ENCODE measurements at regions of chr6 and their contacts with region 1.

Region 1: GRCh38 chr6:26156076-26156849 is 69.0 kb downstream of the HFE start:
- DNase-seq: peak; percentile 77 to 96 (median 84)
- ATAC-seq: peak; percentile 39
- H3K4me3 ChIP-seq: peak overlapping the region; percentile 51 to 86
- H3K4me3 Mint-ChIP-seq: peak overlapping the region; percentile 94
- H3K27ac ChIP-seq: peak overlapping the region; percentile 85 to 98
- H3K27ac Mint-ChIP-seq: peak overlapping the region; percentile 98
- H3K4me1 ChIP-seq: peaks cover 20% of the 10 kb centered on the region
- H3K4me1 Mint-ChIP-seq: peaks cover 34% of the 10 kb centered on the region
- H3K27me3 ChIP-seq: no peaks in the 10 kb centered on the region
- H3K27me3 Mint-ChIP-seq: no peaks in the 10 kb centered on the region
- CTCF ChIP-seq: no peak

Region 2: DNA sequence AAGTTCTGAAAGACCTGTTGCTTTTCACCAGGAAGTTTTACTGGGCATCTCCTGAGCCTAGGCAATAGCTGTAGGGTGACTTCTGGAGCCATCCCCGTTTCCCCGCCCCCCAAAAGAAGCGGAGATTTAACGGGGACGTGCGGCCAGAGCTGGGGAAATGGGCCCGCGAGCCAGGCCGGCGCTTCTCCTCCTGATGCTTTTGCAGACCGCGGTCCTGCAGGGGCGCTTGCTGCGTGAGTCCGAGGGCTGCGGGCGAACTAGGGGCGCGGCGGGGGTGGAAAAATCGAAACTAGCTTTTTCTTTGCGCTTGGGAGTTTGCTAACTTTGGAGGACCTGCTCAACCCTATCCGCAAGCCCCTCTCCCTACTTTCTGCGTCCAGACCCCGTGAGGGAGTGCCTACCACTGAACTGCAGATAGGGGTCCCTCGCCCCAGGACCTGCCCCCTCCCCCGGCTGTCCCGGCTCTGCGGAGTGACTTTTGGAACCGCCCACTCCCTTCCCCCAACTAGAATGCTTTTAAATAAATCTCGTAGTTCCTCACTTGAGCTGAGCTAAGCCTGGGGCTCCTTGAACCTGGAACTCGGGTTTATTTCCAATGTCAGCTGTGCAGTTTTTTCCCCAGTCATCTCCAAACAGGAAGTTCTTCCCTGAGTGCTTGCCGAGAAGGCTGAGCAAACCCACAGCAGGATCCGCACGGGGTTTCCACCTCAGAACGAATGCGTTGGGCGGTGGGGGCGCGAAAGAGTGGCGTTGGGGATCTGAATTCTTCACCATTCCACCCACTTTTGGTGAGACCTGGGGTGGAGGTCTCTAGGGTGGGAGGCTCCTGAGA is 68.8 kb before region 1 on chr6 and contains the start of gene HFE:
- CTCF ChIA-PET with region 1: no interaction called
- POLR2A ChIA-PET with region 1: interaction called, 34 read pairs
- intact Hi-C with region 1: no loop called
- DNase-seq: peak in 7 of 9 experiments; percentile 10 to 59 (median 40)
- ATAC-seq: peak; percentile 35
- H3K4me3 ChIP-seq: peak within 1 kb of the TSS; percentile 75 to 84
- H3K4me3 Mint-ChIP-seq: peak within 1 kb of the TSS; percentile 88
- H3K27ac ChIP-seq: peak within 1 kb of the TSS; percentile 56 to 60
- H3K27ac Mint-ChIP-seq: peak within 1 kb of the TSS; percentile 81
- H3K4me1 ChIP-seq: peaks cover 27% of the 10 kb centered on the region
- H3K4me1 Mint-ChIP-seq: peaks cover 36% of the 10 kb centered on the region
- H3K27me3 ChIP-seq: peaks cover 0 to 2% of the 10 kb centered on the region in 2 experiments
- H3K27me3 Mint-ChIP-seq: no peaks in the 10 kb centered on the region
- CTCF ChIP-seq: no peak
- total RNA-seq, gene HFE: 0.30 to 0.44 TPM

Region 3: DNA sequence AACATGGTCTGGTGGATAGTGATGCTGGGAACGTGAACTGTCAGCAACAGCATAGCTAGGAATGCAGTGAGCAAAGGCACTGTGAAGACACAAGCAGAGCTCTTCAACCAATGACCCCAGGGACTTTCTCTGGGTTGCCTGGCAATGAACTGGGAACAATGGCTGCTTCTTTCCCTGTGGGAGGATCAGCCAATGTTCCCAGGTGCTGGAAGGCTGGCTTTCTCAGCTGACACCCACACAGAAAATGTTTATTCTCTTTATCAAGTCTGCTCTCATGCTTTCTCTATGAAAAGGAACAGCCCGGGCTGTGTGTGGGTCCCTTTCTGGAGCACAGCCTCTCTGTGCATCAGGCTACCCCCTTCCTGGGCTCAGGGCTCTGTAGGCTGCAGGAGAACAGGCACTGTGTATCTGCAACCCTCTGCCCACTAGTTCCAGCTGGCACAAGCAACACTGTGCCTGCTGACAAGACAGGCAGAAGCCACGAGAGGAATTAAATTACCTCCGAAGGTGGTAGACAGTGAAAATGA is 14.8 kb before region 1 on chr6:
- CTCF ChIA-PET with region 1: interaction called, 4 read pairs
- POLR2A ChIA-PET with region 1: interaction called, 40 read pairs
- intact Hi-C with region 1: no loop called
- DNase-seq: no peak
- ATAC-seq: no peak
- H3K4me3 ChIP-seq: no peak overlapping the region
- H3K4me3 Mint-ChIP-seq: no peak overlapping the region
- H3K27ac ChIP-seq: no peak overlapping the region
- H3K27ac Mint-ChIP-seq: no peak overlapping the region
- H3K4me1 ChIP-seq: no peaks in the 10 kb centered on the region
- H3K4me1 Mint-ChIP-seq: peaks cover 2% of the 10 kb centered on the region
- H3K27me3 ChIP-seq: no peaks in the 10 kb centered on the region
- H3K27me3 Mint-ChIP-seq: no peaks in the 10 kb centered on the region
- CTCF ChIP-seq: no peak

Region 4: DNA sequence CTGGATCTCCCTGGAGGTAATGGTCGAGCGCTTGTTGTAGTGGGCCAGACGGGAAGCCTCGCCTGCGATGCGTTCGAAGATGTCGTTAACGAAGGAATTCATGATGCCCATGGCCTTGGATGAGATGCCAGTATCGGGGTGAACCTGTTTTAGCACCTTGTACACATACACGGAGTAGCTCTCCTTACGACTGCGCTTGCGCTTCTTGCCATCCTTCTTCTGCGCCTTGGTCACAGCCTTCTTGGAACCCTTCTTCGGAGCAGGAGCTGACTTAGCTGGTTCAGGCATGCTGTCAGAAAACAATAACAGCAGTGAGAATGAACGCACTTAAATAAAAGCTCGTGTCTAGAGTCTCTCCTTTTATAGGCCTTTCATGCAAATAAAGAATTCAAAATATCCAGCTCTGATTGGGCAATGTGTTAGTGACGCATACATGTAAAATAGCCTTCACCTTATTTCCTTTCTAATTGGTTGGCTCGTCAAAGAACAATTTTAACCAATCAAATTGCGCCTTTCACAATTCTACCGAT is 60.2 kb after region 1 on chr6:
- CTCF ChIA-PET with region 1: interaction called, 7 read pairs
- POLR2A ChIA-PET with region 1: interaction called, 305 read pairs
- intact Hi-C with region 1: loop called (anchors 1 to 2 kb)
- DNase-seq: peak; percentile 61 to 96 (median 73)
- ATAC-seq: peak; percentile 79
- H3K4me3 ChIP-seq: peak overlapping the region; percentile 71 to 74
- H3K4me3 Mint-ChIP-seq: no peak overlapping the region
- H3K27ac ChIP-seq: peak overlapping the region; percentile 82 to 91
- H3K27ac Mint-ChIP-seq: no peak overlapping the region
- H3K4me1 ChIP-seq: peaks cover 19% of the 10 kb centered on the region
- H3K4me1 Mint-ChIP-seq: peaks cover 14% of the 10 kb centered on the region
- H3K27me3 ChIP-seq: no peaks in the 10 kb centered on the region
- H3K27me3 Mint-ChIP-seq: no peaks in the 10 kb centered on the region
- CTCF ChIP-seq: no peak

Region 5: DNA sequence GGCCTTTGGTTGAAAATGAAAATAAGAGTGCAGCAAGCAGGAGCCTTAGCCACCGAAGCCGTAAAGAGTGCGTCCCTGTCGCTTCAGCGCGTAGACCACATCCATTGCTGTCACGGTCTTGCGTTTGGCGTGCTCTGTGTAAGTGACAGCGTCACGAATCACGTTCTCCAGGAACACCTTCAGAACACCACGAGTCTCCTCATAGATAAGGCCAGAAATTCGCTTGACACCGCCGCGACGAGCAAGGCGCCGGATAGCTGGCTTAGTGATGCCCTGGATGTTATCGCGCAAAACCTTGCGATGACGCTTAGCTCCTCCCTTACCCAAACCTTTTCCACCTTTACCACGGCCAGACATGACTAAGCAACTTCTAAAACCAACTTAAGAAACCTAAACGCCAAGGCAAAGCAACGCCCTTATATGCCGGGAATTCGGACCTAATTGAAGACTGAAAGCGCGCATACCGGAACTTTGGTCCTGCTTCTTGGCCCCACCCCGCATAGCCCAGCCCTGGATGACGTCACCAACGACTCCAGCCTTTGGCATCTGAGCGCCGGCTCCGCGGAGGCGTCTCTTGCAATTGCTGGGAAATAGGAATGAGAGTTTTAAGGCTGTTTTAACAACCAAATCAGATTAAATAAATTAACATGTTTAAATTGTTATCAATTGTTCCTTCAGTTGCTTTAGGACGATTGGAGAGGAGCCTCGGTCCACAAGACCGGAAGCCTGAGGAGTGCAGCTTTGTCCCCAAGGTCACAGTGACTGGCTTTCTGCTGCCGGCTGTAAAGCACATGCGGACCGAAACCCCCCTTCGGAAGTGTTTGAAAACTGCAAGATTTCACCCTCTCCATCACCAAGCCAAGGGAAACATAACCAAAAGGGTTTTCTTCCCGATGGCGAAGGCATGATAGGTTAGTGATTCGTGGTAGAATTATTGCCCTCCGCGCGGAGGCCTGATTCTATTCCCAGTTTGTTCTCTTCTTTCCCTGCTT is 129.2 kb after region 1 on chr6:
- CTCF ChIA-PET with region 1: interaction called, 3 read pairs
- POLR2A ChIA-PET with region 1: interaction called, 64 read pairs
- intact Hi-C with region 1: loop called in 1 of 2 experiments (anchors 1 kb)
- DNase-seq: peak; percentile 83 to 99 (median 96)
- ATAC-seq: peak; percentile 82
- H3K4me3 ChIP-seq: peak overlapping the region; percentile 73 to 76
- H3K4me3 Mint-ChIP-seq: peak overlapping the region; percentile 91
- H3K27ac ChIP-seq: peak overlapping the region; percentile 89 to 96
- H3K27ac Mint-ChIP-seq: peak overlapping the region; percentile 97
- H3K4me1 ChIP-seq: peaks cover 14% of the 10 kb centered on the region
- H3K4me1 Mint-ChIP-seq: peaks cover 31% of the 10 kb centered on the region
- H3K27me3 ChIP-seq: no peaks in the 10 kb centered on the region
- H3K27me3 Mint-ChIP-seq: no peaks in the 10 kb centered on the region
- CTCF ChIP-seq: no peak

Region 6: GRCh38 chr6:27809939-27810767 is 1653.9 kb after region 1 on chr6:
- CTCF ChIA-PET with region 1: no interaction called
- POLR2A ChIA-PET with region 1: interaction called, 59 read pairs
- intact Hi-C with region 1: no loop called
- DNase-seq: peak; percentile 63 to 96 (median 74)
- ATAC-seq: peak; percentile 60
- H3K4me3 ChIP-seq: peak overlapping the region; percentile 52 to 65
- H3K4me3 Mint-ChIP-seq: peak overlapping the region; percentile 95
- H3K27ac ChIP-seq: peak overlapping the region; percentile 83 to 87
- H3K27ac Mint-ChIP-seq: peak overlapping the region; percentile 99
- H3K4me1 ChIP-seq: peaks cover 36% of the 10 kb centered on the region
- H3K4me1 Mint-ChIP-seq: peaks cover 57% of the 10 kb centered on the region
- H3K27me3 ChIP-seq: no peaks in the 10 kb centered on the region
- H3K27me3 Mint-ChIP-seq: no peaks in the 10 kb centered on the region
- CTCF ChIP-seq: no peak